Vagina (tissue), 2 donors: ENCODE measurements at regions of chr20 and their contacts with region 1.

Region 1: DNA sequence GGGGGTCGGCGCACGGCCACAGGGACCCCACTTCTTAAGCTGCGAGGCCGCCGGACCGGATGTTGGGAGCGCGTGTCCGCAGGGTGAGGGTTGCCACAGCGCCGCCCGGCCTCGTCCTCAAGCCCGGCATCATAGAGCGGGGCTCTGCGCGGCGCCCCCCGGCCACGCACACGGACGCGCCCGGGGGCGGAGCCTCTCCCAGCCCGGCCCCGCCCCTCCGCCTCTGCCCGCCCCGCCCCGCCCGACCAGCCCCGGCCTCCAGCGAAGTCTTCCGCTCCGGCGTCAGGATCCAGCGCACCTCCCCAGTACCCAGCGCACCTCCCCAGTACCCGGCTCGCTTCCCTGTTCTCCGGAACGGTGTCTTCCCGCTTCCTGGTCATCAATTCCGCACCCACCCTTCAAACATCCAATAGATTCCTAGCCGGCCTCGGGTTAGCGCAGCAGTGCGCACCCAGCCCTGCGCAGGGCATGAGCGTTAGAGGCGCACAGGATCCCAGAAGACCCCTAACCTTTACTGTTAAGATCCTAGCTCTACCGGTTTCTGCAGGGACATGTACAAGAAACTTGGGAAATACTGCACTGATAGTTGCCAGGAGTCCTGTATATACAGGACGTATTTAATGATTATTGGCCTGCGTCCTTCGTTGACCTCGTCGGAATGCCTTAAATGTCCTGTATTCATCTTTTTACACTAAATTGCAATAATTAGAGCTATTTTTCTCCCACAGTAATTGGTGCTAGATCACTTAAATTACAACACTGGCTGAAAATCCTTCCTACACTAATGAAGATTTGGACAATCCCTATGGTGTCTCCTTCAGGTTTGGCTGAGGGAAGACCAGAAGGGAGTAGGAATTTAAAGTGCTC is 535 bp upstream of the DNAAF9 start:
- DNase-seq: peak in 1 of 2 donors; percentile 89
- H3K4me3 ChIP-seq: peak overlapping the region; percentile 89 to 93
- H3K27ac ChIP-seq: peak overlapping the region; percentile 94
- H3K4me1 ChIP-seq: peaks cover 40% of the 10 kb centered on the region
- H3K27me3 ChIP-seq: no peaks in the 10 kb centered on the region
- CTCF ChIP-seq: no peak
- POLR2A ChIP-seq: peak in 1 of 2 donors; percentile 5

Region 2: GRCh38 chr20:3470627-3471396 is 62.8 kb after region 1 on chr20 and contains the start of gene ATRN:
- intact Hi-C with region 1: loop called (anchors 5 kb)
- DNase-seq: no peak
- H3K4me3 ChIP-seq: peak within 1 kb of the TSS; percentile 89 to 100
- H3K27ac ChIP-seq: peak within 1 kb of the TSS; percentile 79
- H3K4me1 ChIP-seq: peaks cover 34% of the 10 kb centered on the region
- H3K27me3 ChIP-seq: no peaks in the 10 kb centered on the region
- CTCF ChIP-seq: no peak
- POLR2A ChIP-seq: peak in 1 of 2 donors; percentile 47
- total RNA-seq, gene ATRN: 22.8 TPM